AG04449 (cell line): ENCODE measurements at regions of chr2 and their contacts with region 1.

Region 1: DNA sequence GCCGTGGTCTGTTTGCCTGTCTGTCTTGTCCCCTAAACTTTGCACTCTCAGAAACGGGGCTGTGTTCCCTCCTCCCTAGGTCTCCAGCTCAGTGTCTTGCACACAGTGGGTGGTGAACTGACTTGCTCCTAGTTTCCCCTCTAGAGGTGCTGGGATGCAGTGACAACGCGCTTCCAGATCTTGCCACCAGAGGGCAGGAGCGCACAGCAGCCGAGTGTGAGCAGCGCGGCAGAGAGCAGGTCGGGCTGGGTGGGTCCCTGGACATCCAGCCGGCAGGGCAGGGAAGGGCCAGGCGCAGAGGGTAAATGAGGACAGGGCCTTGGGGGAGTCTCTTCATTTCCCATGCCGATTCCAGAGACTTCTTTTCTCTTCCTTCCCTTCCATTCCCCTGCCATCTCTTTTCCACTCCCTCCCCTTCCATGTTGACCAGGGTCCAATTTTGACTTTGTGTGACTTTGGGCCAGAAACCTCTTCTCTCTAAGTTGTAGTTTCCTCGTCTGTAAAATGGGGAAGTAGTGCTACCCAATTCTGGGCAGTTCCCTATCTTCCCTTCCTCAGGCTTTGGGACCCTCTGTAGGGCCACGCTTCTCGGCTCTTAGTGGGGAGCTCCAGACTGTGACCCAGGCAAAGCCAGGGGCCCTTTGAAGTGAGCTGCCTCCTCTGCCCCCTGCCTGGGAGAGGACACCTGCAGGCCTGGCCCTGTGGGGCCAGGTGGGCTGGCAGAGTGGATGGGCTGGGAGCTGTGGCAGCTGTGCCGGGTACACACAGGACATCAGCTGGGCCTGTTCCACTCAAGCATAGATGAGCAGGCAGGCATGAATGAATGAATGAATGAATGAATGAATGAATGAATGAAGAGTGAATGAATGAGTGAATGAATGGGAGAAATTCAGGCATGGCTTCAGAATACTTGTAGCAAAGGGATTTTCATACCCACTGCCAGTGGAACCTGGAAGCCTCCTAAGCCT is 43.3 kb upstream of the TAF1B start:
- DNase-seq: no peak
- H3K4me3 ChIP-seq: no peak overlapping the region
- CTCF ChIP-seq: peak; percentile 100

Region 2: GRCh38 chr2:9675415-9676351 is 124.3 kb before region 1 on chr2:
- CTCF ChIA-PET with region 1: no interaction called
- POLR2A ChIA-PET with region 1: no interaction called
- DNase-seq: peak; percentile 84
- H3K4me3 ChIP-seq: peak overlapping the region; percentile 47
- CTCF ChIP-seq: no peak

Region 3: DNA sequence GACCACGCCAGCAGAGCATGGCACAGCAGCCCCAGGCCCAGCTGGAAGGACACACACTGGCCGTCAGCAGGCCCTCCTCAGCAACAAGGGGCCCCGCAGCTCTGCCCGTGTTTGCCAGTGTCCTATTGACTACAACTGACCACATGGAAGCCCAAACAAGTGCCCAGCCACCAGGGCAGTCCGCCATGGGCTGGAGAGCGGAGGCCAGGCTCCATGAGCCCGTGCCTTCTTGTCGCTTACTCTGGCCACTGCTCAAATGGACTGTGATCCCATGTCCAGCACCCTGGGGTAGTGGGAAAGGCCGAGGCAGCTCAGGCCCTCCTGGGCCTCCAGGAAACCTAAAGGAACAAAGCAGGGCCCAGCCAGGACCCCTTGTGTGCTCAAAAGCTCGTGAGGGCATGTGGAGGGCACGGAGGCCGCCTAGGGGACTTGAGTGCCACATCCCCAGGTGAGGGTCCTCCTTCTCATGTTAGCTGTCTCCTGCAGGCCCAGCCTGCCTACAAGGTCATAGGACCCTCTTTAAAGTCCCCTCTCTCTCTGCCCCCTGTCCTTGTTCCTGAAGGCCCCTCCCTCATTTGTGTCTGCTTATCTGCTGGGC is 10.5 kb before region 1 on chr2:
- CTCF ChIA-PET with region 1: interaction called, 33 read pairs
- POLR2A ChIA-PET with region 1: no interaction called
- DNase-seq: no peak
- H3K4me3 ChIP-seq: no peak overlapping the region
- CTCF ChIP-seq: no peak

Region 4: DNA sequence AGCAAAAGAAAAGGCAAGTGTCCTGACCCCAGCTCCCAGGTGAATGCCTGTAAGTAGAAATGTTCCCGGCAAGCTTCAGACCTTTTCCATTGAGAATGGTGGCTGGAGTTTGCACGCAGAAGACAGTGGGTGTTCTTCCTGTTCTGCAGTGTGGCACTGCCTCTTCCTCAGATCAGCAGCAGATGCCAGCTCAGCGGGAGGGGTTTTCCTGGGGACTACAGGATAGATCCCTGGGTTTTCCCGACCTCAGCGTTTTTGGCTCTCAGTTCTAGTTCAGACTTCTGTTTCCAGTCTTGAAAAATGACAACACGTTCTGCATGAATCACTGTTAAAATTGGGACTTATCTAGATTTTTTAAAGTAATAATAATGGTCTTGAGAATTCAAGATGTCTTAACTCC is 190.8 kb after region 1 on chr2:
- CTCF ChIA-PET with region 1: interaction called, 12 read pairs
- POLR2A ChIA-PET with region 1: interaction called, 3 read pairs
- DNase-seq: no peak
- H3K4me3 ChIP-seq: no peak overlapping the region
- CTCF ChIP-seq: no peak

Region 5: GRCh38 chr2:10043906-10044601 is 244.1 kb after region 1 on chr2:
- CTCF ChIA-PET with region 1: interaction called, 260 read pairs
- POLR2A ChIA-PET with region 1: no interaction called
- DNase-seq: no peak
- H3K4me3 ChIP-seq: peak overlapping the region; percentile 64
- CTCF ChIP-seq: no peak

Region 6: DNA sequence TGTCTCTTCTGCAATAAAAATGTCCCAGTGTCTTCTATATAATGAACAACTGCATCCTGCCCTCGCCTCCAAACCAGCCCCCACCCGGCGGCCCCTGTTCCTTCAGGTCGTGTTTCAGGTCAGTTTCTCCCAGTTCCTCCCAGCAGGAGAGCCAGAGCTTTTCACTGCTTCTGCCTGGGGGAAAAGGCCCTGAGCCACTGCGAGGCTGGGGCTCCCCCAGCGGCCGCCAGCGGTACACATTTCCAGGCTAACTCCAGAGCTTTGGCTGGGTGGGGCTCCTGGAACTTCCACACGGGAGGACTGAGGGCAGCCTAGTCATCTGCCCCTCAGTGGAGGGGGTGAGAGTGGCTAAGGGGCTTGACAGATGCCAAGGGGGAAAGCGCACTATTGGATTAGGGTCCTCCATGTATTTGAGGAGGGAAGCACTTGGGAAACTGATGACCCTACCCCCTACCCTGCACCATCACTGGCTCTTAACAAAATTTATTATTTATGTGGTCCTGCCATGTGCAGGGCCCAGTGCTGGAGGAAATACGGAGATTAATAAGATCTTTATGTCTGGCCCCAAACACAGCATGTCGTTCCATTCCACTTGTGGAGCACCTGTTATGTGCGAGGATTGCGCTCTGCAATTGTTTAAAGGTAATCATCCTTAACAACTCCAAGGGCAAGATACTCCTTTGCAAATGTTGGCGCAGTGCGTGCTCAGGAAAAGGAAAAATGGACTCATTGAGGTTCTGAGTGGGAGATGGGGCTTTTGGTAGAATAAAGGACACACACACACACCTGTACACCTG is 297.6 kb after region 1 on chr2:
- CTCF ChIA-PET with region 1: interaction called, 23 read pairs
- POLR2A ChIA-PET with region 1: no interaction called
- DNase-seq: no peak
- H3K4me3 ChIP-seq: no peak overlapping the region
- CTCF ChIP-seq: peak; percentile 97